PC-3 (cell line): ENCODE measurements at regions of chr5 and their contacts with region 1.

Region 1: GRCh38 chr5:148826053-148826738 is at the start of gene ADRB2:
- DNase-seq: peak; percentile 100
- ATAC-seq: peak; percentile 83
- H3K4me3 ChIP-seq: peak within 1 kb of the TSS; percentile 73
- H3K27ac ChIP-seq: peak within 1 kb of the TSS; percentile 69
- H3K4me1 ChIP-seq: peaks cover 51% of the 10 kb centered on the region
- H3K27me3 ChIP-seq: no peaks in the 10 kb centered on the region
- CTCF ChIP-seq: no peak
- total RNA-seq, gene ADRB2: 41.1 and 42.1 TPM in 2 replicates

Region 2: GRCh38 chr5:148776780-148777179 is 49.4 kb before region 1 on chr5:
- CTCF ChIA-PET with region 1: no interaction called
- POLR2A ChIA-PET with region 1: no interaction called
- intact Hi-C with region 1: loop called (anchors 2 kb)
- DNase-seq: peak; percentile 99
- ATAC-seq: peak; percentile 100
- H3K4me3 ChIP-seq: no peak overlapping the region
- H3K27ac ChIP-seq: peak overlapping the region; percentile 67
- H3K4me1 ChIP-seq: peaks cover 27% of the 10 kb centered on the region
- H3K27me3 ChIP-seq: no peaks in the 10 kb centered on the region
- CTCF ChIP-seq: no peak

Region 3: DNA sequence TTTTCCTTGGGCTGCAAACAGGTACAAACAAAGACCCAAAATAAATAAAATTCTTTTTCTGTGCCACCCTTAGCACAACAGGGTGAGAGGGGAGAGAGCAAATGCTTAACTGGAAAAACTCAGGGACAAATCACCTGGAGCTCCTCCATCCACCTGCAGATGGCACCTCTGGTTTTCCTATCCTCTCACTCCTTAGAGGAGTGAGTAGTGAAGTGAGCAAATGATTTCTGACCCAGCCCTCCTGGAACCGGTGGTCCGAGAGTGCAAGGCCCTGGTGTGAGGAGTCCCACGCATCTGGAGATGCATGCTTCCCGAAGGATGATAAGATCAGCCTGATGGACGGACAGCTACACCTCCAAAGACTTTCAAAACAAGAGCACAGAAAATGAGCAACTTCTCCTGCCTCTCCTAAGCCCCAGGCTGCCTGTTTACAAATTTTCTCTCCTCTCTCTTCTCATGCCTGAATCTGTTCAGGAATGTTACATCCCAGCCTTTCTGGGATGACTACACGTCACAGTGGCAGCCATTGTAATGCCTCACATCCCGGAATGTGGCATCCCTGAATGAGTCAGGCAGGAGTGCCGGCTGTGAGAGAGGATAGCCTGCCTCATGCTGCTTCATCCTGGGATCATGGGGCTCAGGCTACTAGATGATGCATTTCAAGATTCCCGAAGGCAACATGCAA is 86.7 kb after region 1 on chr5:
- CTCF ChIA-PET with region 1: interaction called, 4 read pairs
- POLR2A ChIA-PET with region 1: interaction called, 3 read pairs
- intact Hi-C with region 1: loop called (anchors 1 kb)
- DNase-seq: peak; percentile 100
- ATAC-seq: peak; percentile 62
- H3K4me3 ChIP-seq: peak overlapping the region; percentile 19; the same call in 1 of the 2 replicates
- H3K27ac ChIP-seq: peak overlapping the region; percentile 88
- H3K4me1 ChIP-seq: peaks cover 80% of the 10 kb centered on the region
- H3K27me3 ChIP-seq: no peaks in the 10 kb centered on the region
- CTCF ChIP-seq: peak; percentile 97

Region 4: GRCh38 chr5:148939676-148940075 is 113.5 kb after region 1 on chr5:
- CTCF ChIA-PET with region 1: no interaction called
- POLR2A ChIA-PET with region 1: no interaction called
- intact Hi-C with region 1: loop called (anchors 1 kb)
- DNase-seq: peak; percentile 100
- ATAC-seq: peak; percentile 90
- H3K4me3 ChIP-seq: no peak overlapping the region
- H3K27ac ChIP-seq: peak overlapping the region; percentile 81
- H3K4me1 ChIP-seq: peaks cover 23% of the 10 kb centered on the region
- H3K27me3 ChIP-seq: no peaks in the 10 kb centered on the region
- CTCF ChIP-seq: no peak

Region 5: DNA sequence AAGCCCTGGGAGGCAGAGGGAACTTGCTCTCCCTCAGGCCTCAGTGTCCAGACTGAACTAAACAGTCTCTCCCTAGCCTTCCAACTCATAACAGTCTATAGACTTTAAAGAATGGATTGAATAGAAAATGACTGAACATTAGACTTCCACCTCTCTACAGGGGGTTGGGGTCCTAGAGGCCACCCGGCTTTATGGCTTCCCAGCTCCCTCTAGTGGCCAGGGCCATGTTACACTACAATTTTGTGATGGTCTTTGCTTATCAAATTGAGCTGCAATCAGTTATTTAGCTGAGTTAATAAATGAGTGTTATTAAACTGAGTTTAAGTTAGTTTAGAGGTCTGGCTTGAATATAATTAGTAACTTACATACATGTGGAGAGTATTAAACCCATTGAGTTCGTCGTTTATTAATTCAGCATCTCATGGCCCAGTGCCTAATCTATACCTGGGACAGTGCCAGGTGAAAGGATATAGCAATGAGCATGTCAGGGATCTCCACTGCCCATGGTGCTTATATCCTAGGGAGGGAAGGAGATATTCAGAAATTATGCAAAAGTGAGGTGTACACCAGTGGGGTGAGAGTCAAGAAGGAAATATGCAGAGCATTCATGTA is 131.5 kb after region 1 on chr5:
- CTCF ChIA-PET with region 1: interaction called, 15 read pairs
- POLR2A ChIA-PET with region 1: interaction called, 9 read pairs
- intact Hi-C with region 1: loop called (anchors 1 kb)
- DNase-seq: peak; percentile 86
- ATAC-seq: no peak
- H3K4me3 ChIP-seq: no peak overlapping the region
- H3K27ac ChIP-seq: no peak overlapping the region
- H3K4me1 ChIP-seq: peaks cover 49% of the 10 kb centered on the region
- H3K27me3 ChIP-seq: no peaks in the 10 kb centered on the region
- CTCF ChIP-seq: peak; percentile 100

Region 6: DNA sequence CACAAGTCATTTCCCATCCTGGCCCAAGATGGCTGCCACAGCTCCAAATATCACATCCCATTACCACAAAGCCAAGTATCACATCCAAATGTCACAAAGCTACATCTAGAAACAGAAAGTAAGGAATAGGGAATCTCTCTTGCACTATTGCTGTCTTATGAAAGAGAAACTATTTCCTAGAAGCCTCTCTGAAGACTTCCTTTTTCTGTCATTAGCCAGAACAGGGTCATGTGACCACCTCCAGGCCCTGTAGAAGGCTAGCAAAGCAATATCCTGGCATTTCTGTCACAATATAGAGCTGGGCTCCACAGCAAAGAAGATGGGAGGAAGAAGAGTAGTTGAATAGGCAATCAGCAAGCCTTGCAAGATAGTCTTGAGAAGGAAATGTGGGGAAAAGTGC is 137.5 kb after region 1 on chr5:
- CTCF ChIA-PET with region 1: no interaction called
- POLR2A ChIA-PET with region 1: interaction called, 6 read pairs
- intact Hi-C with region 1: loop called (anchors 1 kb)
- DNase-seq: no peak
- ATAC-seq: no peak
- H3K4me3 ChIP-seq: no peak overlapping the region
- H3K27ac ChIP-seq: peak overlapping the region; percentile 79; the same call in 1 of the 2 replicates
- H3K4me1 ChIP-seq: peaks cover 81% of the 10 kb centered on the region
- H3K27me3 ChIP-seq: no peaks in the 10 kb centered on the region
- CTCF ChIP-seq: no peak

Region 7: GRCh38 chr5:149268928-149269557 is 442.8 kb after region 1 on chr5:
- CTCF ChIA-PET with region 1: no interaction called
- POLR2A ChIA-PET with region 1: interaction called, 6 read pairs
- intact Hi-C with region 1: loop called (anchors 5 kb)
- DNase-seq: peak; percentile 96
- ATAC-seq: 0 out of 2 replicates have a peak, but pooled peaks have one; percentile 3
- H3K4me3 ChIP-seq: no peak overlapping the region
- H3K27ac ChIP-seq: no peak overlapping the region
- H3K4me1 ChIP-seq: peaks cover 28% of the 10 kb centered on the region
- H3K27me3 ChIP-seq: no peaks in the 10 kb centered on the region
- CTCF ChIP-seq: peak; percentile 99